ENCODE measurements at regions of chr9 and their contacts with region 1.

Region 1: DNA sequence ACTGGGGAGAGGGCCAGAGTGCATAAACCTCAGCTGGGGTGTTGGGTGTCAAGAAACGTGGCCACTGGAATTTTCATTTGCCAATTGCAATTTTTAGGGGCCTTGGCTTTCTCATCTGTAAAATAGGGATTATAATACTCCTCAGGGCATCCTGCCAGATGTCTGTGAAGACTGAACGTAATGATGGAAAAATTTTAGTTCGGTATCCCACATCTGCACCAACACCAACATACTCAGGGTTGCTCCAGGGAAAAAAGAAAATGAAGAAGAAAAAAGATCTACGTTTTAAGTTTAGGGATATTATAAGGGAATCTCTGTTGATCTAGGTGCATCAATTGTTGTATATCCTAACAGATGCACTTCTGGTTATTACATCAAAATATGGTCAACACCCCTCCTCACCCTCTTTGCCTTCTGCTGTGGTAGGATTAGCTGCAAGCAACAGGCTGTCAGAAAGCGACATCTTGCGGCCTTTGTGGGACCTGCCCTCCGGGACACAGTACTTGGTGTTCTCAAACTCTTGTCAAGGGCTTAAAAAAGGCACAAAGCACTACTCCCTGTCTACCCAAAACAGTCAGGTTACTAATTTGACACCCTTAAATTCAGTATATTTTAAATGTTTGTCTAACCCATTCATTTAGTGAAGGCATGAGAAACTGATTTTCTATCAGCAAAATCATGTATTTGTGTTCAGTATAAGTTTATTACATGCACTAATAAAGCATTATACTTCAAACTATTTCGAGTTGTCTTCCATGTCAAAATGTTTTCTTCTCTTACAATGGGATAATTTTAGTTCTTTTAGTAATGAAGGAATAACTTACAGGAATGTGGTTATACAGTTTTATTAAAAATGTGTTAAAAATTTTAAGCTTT is 8.3 kb upstream of the TBC1D2 start:
- DNase-seq: peak in 1 of 2 donors; percentile 83
- H3K4me3 ChIP-seq: no peak overlapping the region
- H3K27ac ChIP-seq: no peak overlapping the region
- H3K4me1 ChIP-seq: no peaks in the 10 kb centered on the region
- H3K27me3 ChIP-seq: no peaks in the 10 kb centered on the region
- CTCF ChIP-seq: peak; percentile 80 to 91 (median 89)

Region 2: GRCh38 chr9:98207606-98208005 is 56.1 kb before region 1 on chr9:
- intact Hi-C with region 1: loop called (anchors 1 kb)
- DNase-seq: no peak
- H3K4me3 ChIP-seq: no peak overlapping the region
- H3K27ac ChIP-seq: no peak overlapping the region
- H3K4me1 ChIP-seq: no peaks in the 10 kb centered on the region
- H3K27me3 ChIP-seq: no peaks in the 10 kb centered on the region
- CTCF ChIP-seq: no peak

Measured in ascending aorta (tissue), 2 donors.